ENCODE measurements at regions of chr4 and their contacts with region 1.

Region 1: DNA sequence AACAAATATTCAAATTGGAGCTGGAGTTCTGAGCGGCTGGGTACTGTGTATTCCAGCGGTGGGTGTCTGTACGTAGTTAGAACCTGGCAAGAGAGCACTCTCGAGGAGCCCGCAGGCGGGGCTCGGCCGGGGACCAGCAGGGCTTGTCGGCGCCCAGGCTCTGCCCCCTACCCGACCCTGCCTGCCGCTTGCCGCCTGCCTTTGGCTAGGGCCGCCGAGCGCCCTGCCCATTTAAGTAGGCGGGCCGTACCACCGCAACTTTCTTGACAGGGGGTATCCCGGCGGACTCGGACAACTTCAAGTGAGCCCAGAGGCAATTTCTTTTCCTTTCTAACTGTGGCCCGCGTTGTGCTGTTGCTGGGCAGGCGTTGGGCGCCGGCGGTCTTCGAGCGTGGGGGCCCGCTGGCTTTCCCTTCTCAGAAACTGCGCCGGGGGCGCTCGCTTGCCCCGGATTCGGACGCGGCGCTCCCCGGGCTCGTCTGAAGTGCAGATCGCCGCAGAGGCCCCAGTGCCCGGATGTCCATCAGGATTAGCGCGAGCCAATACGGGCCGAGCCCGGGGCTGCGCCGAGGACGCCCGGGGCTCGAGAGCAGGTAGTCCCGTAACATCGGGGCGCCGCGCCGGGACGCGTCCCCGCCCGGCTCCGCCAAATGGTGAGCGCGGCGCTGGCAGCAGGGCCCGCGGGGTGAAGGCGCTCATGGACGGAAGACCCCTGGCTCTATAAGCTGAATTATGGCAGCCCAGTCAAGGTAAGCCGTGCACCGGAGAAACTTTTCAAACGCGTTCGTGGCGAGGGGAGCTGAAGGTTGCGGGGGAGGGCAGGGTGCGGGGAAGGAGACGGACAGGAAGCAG is 72.1 kb downstream of the AFF1 start:
- DNase-seq: peak; percentile 94 to 97 (median 96)
- ATAC-seq: peak; percentile 91
- H3K4me3 ChIP-seq: peak overlapping the region; percentile 54 to 75
- H3K27ac ChIP-seq: peak overlapping the region; percentile 98
- H3K4me1 ChIP-seq: peaks cover 25 to 55% of the 10 kb centered on the region in 2 donors
- H3K27me3 ChIP-seq: no peaks in the 10 kb centered on the region
- CTCF ChIP-seq: no peak

Region 2: GRCh38 chr4:86934771-86935565 is 71.9 kb before region 1 on chr4 and contains the start of gene AFF1:
- intact Hi-C with region 1: loop called in 1 of 2 experiments (anchors 10 kb)
- DNase-seq: peak; percentile 88 to 98 (median 95)
- ATAC-seq: peak; percentile 92
- H3K4me3 ChIP-seq: peak within 1 kb of the TSS; percentile 88 to 90
- H3K27ac ChIP-seq: peak within 1 kb of the TSS; percentile 96 to 99
- H3K4me1 ChIP-seq: peaks cover 14 to 53% of the 10 kb centered on the region in 2 donors
- H3K27me3 ChIP-seq: no peaks in the 10 kb centered on the region
- CTCF ChIP-seq: peak; percentile 19 to 53
- polyA plus RNA-seq, gene AFF1: 40.8 to 51.6 (median 45.4) TPM